ENCODE measurements at regions of chr20 and their contacts with region 1.

Region 1: DNA sequence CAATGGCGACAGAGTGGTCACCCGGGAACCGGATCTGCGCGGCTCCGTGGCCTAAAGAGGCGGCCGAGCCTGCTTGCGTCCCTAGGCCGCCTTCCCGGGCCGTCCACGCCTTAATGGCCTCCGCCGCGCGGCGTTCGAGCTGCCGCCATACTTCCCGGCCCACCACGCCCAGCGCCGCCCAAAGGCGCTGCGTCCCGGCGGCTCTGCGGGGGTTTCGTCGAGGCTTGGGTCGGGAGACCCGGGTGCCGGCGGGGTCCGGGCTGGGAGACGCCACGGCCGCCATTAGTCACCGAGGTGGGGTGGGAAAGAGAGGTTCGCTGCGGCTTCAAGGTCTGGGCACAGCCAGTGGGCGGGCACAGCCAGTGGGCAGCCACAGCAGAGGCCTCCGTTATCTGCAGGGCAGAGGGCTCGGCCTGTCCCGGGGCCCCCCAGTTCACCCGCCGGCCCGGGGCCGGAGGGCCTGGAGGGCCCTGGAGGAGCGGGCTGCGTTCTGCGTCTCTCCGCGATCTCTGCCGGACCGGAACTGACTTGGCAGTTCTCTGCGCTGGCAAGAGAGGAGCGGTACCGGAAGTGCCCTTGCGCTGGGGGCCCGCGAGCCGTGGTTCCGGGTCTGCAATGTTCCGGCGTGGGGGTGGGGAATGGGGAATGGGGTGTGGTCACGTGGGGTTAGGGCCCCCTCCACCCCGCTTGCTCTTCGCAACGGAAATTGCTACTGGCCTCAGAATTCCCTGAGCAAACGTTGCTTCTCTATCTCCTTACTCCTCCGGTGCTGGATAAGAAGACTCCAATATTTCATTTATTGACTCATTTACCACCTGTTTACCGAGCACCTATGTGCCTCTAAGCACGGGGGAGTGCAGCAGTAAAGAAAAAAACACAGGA is 82.3 kb downstream of the CNBD2 start:
- DNase-seq: peak; percentile 96
- H3K4me3 ChIP-seq: peak overlapping the region; percentile 82 to 100 (median 98)
- H3K27ac ChIP-seq: peak overlapping the region; percentile 94 to 99 (median 98)
- H3K4me1 ChIP-seq: peaks cover 0 to 34% (median 24%) of the 10 kb centered on the region in 4 donors
- H3K27me3 ChIP-seq: no peaks in the 10 kb centered on the region
- CTCF ChIP-seq: no peak
- EP300 ChIP-seq: no peak
- POLR2A ChIP-seq: peak; percentile 97 to 98

Region 2: DNA sequence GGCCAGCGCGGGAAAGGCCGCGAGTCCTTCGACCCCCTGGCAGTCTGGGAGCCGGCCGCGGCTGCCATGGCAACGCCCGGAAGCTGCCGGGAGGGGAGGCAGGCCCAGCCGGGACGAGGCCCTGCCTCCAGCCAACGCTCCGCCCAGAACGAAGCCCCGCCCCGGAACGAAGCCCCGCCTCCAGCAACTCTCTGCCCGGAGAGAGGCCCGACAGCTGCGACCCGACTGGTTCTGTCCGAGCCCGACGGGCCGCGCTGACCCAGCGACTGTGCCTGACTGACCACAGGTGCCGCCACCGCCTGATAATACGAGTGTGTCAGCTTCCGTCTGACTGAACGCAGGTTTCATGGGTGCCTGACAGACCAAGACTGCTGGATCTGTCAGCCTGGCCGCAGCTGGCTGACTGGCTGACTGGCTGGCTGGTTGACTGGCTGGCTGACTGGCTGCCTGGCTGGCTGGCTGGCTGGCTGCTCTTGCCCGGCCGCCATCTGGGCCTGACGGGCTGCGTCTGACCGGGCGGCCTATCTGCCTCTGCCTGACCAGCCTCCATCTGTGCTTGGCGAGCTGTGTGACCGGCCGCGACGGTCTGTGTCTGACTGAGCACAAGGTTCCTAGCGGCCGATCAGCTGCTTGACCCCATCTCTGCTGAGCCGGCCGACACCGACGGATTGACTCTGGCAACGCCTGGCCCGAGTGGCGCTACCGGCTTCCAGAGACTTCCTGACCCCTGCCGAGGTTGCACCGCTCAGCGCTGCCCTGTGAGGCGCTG is 14.2 kb after region 1 on chr20:
- intact Hi-C with region 1: loop called (anchors 1 kb)
- DNase-seq: peak; percentile 97
- H3K4me3 ChIP-seq: peak overlapping the region; percentile 55 to 72 (median 70)
- H3K27ac ChIP-seq: peak overlapping the region; percentile 77 to 87 (median 81)
- H3K4me1 ChIP-seq: peaks cover 0 to 17% (median 12%) of the 10 kb centered on the region in 4 donors
- H3K27me3 ChIP-seq: no peaks in the 10 kb centered on the region
- CTCF ChIP-seq: no peak
- EP300 ChIP-seq: no peak
- POLR2A ChIP-seq: peak; percentile 42 to 75

Region 3: GRCh38 chr20:36153736-36154699 is 103.3 kb after region 1 on chr20:
- intact Hi-C with region 1: loop called (anchors 5 kb)
- DNase-seq: peak; percentile 92
- H3K4me3 ChIP-seq: peak overlapping the region; percentile 53 to 83 (median 70)
- H3K27ac ChIP-seq: peak overlapping the region; percentile 61 to 84 (median 73)
- H3K4me1 ChIP-seq: peaks cover 3 to 33% (median 29%) of the 10 kb centered on the region in 4 donors
- H3K27me3 ChIP-seq: no peaks in the 10 kb centered on the region
- CTCF ChIP-seq: no peak
- EP300 ChIP-seq: no peak
- POLR2A ChIP-seq: no peak